Activated CD8-positive, alpha-beta T cell treated with anti-CD3 and anti-CD28 coated beads for 36 hours (primary cell): ENCODE measurements at regions of chr1 and their contacts with region 1.

Region 1: DNA sequence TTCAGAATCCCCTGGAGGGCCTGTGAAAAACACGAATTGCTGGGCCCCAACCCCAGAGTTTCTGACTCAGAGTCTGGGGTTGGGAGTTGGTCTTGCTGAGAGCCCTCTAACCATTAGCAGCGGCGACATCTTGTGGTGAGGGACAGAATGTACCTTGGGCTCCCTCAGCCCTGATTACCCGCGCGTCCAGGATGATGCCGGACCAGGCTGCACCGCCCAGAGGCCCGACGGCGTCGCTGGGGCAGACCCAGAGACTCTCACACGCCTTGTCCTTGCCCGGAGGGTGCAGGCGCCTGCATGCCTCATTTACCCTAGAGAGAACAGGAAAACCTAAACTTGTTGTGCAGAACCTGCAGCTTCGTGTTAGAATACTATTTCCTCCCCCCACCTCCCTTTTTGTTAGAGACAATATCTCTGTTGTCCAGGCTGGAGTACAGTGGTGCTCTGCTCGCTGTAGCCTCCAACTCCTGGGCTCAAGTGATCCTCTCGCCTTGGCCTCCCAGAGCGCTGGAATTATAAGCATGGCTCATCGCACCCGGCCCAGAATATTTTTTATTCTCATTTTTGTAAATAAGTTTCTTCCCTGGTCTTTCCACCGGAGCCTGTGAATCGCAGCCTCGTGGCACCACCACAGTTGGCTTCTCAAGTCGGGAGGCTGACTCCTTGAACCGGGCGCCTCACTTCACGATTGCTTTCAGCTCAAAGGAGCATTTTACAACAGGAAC is 22.2 kb upstream of the RD3 start:
- DNase-seq: peak; percentile 88
- ATAC-seq: peak; percentile 76
- H3K4me3 Mint-ChIP-seq: peak overlapping the region; percentile 42
- H3K27ac Mint-ChIP-seq: peak overlapping the region; percentile 33
- H3K4me1 Mint-ChIP-seq: peaks cover 24% of the 10 kb centered on the region
- H3K27me3 Mint-ChIP-seq: peaks cover 2% of the 10 kb centered on the region
- CTCF ChIP-seq: peak; percentile 77

Region 2: DNA sequence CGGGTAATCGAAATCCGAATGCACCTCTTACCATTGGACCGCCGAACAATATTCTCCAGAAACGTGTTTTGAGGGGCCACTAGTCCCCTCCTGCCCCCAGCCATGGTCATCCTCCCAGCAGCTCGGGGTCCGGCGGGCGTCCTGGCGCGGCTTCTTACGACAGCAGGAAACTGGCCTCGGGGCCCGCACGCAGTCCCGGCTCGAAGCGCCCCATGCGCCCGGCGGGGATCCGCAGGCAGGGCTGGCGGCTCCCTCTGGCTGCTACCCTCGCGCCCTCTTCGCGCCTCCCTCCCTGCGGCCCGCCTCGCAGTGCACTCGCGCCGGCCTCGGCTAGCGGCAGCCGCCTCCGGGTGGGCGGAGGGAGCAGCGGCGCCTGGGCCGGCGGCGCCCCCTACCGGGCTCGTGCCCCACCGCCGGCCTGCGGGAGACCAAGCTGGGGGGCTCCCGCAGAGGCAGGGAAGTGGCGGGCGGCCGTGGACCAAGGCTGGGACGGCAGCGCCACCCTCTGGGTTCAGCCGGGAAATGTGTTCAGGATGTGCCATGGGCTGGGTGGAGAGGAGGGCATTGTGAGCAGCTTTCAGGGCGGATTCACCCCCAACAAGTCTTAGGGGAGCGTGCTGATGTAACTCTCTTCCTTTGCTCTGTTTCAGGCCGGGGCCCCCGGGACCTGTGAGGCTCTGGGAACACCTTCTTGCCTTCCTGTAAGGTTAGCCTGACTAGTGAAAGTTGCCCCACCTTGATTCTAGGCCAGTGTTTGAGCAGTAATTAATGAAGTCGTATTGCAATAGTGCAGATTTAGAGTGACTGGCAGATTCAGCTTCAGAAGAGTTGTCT is 380.1 kb before region 1 on chr1 and contains the start of gene KCNH1:
- CTCF ChIA-PET with region 1: interaction called, 17 read pairs
- POLR2A ChIA-PET with region 1: no interaction called
- intact Hi-C with region 1: no loop called
- DNase-seq: peak; percentile 92
- ATAC-seq: peak; percentile 93
- H3K4me3 Mint-ChIP-seq: peak within 1 kb of the TSS; percentile 59
- H3K27ac Mint-ChIP-seq: no peak within 1 kb of the TSS
- H3K4me1 Mint-ChIP-seq: peaks cover 7% of the 10 kb centered on the region
- H3K27me3 Mint-ChIP-seq: peaks cover 35% of the 10 kb centered on the region
- CTCF ChIP-seq: peak; percentile 97
- total RNA-seq, gene KCNH1: not detected

Region 3: DNA sequence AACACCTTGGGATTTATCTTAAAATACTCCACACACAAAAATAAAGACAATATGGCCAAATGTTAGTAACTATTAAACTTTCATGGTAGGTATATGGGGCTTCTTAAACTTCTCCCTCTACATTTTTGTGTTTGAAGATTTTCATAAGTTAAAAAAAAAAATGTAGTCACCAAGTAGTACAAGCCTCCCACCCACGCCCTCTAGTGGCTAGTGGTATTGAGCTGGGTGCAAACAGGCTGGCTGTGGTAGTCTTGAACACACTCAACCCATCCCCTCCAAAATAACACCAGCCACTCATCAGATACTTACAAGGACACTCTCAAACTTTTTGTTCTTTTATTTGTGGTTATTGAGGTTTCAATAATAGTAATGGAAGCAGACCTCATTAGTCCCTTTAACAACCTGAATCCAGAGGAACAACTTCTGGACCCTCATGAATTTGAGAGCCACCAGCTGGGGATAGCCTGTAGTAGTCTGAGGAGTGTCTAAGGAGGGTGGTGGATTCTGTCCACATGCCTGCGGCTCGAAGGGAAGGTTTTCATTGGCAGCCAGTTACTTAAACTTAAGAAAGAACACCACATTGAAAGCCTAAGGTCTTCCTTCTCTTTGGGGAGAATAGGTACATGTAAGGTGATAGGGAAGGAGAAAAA is 37.9 kb before region 1 on chr1:
- CTCF ChIA-PET with region 1: interaction called, 46 read pairs
- POLR2A ChIA-PET with region 1: no interaction called
- intact Hi-C with region 1: no loop called
- DNase-seq: peak; percentile 90
- ATAC-seq: peak; percentile 87
- H3K4me3 Mint-ChIP-seq: no peak overlapping the region
- H3K27ac Mint-ChIP-seq: no peak overlapping the region
- H3K4me1 Mint-ChIP-seq: no peaks in the 10 kb centered on the region
- H3K27me3 Mint-ChIP-seq: peaks cover 15% of the 10 kb centered on the region
- CTCF ChIP-seq: peak; percentile 79

Region 4: DNA sequence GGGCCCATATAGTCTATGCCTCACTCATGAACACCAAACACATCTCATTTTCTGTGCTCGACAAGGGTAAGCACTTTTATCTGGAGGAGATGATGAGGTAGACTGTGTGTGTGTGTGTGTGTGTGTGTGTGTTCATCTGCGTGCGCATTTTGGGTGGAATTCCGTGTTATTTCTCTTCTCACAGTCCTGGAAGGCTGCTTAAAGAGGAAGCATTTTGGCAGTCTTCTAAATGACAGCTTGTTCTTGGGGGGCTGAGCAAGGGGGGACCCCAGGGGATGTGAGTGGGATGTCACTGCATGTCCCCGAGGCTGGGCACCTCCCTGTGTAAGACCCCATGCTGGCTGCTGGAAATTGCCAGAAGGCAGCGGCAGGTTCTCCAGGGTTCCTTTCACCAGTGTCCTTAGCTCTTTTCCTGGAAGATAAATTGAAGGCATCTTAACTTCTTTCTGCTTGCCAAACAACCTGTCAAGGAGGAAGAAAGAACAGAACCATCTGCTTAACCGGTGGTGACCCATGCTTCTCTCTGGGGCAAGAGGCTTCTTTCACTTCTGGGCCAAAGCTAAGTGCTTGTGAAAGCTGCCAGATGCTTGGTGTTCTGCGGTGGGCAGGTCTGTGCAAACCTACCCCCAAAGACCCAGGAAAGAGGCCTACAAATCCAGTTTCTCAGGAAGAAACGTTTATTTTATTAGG is 12.3 kb before region 1 on chr1:
- CTCF ChIA-PET with region 1: interaction called, 25 read pairs
- POLR2A ChIA-PET with region 1: no interaction called
- intact Hi-C with region 1: no loop called
- DNase-seq: no peak
- ATAC-seq: no peak
- H3K4me3 Mint-ChIP-seq: no peak overlapping the region
- H3K27ac Mint-ChIP-seq: no peak overlapping the region
- H3K4me1 Mint-ChIP-seq: no peaks in the 10 kb centered on the region
- H3K27me3 Mint-ChIP-seq: peaks cover 4% of the 10 kb centered on the region
- CTCF ChIP-seq: no peak

Region 5: GRCh38 chr1:211643324-211644212 is 129.4 kb after region 1 on chr1:
- CTCF ChIA-PET with region 1: interaction called, 13 read pairs
- POLR2A ChIA-PET with region 1: no interaction called
- intact Hi-C with region 1: no loop called
- DNase-seq: peak; percentile 45
- ATAC-seq: peak; percentile 73
- H3K4me3 Mint-ChIP-seq: no peak overlapping the region
- H3K27ac Mint-ChIP-seq: no peak overlapping the region
- H3K4me1 Mint-ChIP-seq: peaks cover 11% of the 10 kb centered on the region
- H3K27me3 Mint-ChIP-seq: no peaks in the 10 kb centered on the region
- CTCF ChIP-seq: no peak

Region 6: DNA sequence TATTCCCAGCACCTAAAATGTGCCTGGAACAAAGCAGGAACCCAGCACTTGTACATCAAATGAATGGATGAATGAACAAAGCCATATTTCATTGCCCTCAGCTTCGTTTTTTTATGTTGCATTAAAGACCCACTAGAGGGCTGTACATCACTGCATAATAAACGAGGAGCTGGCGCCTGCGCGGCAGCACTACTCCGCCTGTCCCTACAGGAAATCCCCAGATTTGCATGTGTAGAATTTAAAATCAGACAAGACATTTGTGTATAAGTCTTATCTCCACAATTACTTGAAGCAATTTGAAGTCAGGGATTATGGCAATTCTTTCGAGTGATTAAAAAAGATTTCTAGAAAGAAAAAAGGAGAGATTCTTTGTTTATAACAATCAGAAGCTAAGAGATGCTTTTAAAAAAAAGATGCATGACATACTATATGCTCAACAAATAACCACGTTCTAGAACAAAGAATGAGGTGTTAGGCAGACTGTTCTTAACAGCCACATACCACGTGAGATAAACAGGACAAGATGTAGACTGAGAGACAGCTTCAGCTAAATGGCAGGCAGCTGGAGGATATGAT is 166.6 kb after region 1 on chr1:
- CTCF ChIA-PET with region 1: no interaction called
- POLR2A ChIA-PET with region 1: no interaction called
- intact Hi-C with region 1: no loop called
- DNase-seq: peak; percentile 79
- ATAC-seq: peak; percentile 93
- H3K4me3 Mint-ChIP-seq: no peak overlapping the region
- H3K27ac Mint-ChIP-seq: peak overlapping the region; percentile 83
- H3K4me1 Mint-ChIP-seq: peaks cover 8% of the 10 kb centered on the region
- H3K27me3 Mint-ChIP-seq: no peaks in the 10 kb centered on the region
- CTCF ChIP-seq: peak; percentile 69

Region 7: DNA sequence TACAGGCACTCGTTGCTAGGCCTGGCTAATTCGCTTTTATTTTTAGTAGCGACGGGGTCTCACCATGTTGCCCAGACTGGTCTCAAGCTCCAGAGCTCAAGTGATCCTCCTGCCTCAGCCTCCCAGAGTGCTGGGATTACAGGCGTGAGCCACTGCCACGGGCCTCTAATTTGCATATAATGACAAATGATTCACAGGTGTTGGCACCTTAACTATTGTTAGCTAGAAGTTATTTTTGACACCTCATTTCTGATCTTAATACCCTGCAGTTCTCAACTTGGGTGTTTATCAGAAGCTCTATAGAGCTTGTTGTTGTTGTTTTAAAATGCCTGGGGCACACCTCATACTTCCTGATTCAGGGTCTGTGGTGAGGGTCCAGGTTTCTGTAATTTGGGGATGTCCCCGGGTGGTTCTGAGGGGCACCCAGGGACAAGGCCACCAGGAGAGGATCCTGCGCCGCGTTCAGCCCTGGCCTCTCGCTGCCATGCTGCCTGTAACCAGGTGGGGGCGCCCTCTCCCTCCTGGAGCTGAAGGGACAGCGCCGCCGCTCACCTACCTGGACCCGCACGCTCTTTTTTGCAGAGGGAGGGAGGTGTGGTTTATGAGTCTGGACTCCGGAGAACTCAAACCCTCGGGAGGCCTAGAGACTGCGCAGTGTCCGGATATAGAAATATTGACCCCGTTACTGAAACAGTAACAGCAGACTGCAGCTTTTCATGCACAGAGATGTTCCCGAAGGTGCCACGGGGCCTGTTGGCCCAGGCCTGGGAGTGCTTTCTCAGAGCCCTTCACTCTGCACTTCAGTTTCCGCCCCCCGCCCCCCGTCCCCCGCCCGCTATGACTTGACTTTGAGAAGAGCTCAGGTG is 184.2 kb after region 1 on chr1:
- CTCF ChIA-PET with region 1: no interaction called
- POLR2A ChIA-PET with region 1: no interaction called
- intact Hi-C with region 1: no loop called
- DNase-seq: peak; percentile 92
- ATAC-seq: peak; percentile 95
- H3K4me3 Mint-ChIP-seq: peak overlapping the region; percentile 33
- H3K27ac Mint-ChIP-seq: no peak overlapping the region
- H3K4me1 Mint-ChIP-seq: peaks cover 24% of the 10 kb centered on the region
- H3K27me3 Mint-ChIP-seq: peaks cover 1% of the 10 kb centered on the region
- CTCF ChIP-seq: peak; percentile 95

Region 8: GRCh38 chr1:211788626-211789025 is 274.4 kb after region 1 on chr1:
- CTCF ChIA-PET with region 1: no interaction called
- POLR2A ChIA-PET with region 1: no interaction called
- intact Hi-C with region 1: no loop called
- DNase-seq: no peak
- ATAC-seq: no peak
- H3K4me3 Mint-ChIP-seq: no peak overlapping the region
- H3K27ac Mint-ChIP-seq: no peak overlapping the region
- H3K4me1 Mint-ChIP-seq: peaks cover 4% of the 10 kb centered on the region
- H3K27me3 Mint-ChIP-seq: no peaks in the 10 kb centered on the region
- CTCF ChIP-seq: no peak